ENCODE measurements at regions of chr5 and their contacts with region 1.

Region 1: GRCh38 chr5:142133330-142134206 is 25.0 kb downstream of the NDFIP1 start:
- DNase-seq: no peak

Region 2: DNA sequence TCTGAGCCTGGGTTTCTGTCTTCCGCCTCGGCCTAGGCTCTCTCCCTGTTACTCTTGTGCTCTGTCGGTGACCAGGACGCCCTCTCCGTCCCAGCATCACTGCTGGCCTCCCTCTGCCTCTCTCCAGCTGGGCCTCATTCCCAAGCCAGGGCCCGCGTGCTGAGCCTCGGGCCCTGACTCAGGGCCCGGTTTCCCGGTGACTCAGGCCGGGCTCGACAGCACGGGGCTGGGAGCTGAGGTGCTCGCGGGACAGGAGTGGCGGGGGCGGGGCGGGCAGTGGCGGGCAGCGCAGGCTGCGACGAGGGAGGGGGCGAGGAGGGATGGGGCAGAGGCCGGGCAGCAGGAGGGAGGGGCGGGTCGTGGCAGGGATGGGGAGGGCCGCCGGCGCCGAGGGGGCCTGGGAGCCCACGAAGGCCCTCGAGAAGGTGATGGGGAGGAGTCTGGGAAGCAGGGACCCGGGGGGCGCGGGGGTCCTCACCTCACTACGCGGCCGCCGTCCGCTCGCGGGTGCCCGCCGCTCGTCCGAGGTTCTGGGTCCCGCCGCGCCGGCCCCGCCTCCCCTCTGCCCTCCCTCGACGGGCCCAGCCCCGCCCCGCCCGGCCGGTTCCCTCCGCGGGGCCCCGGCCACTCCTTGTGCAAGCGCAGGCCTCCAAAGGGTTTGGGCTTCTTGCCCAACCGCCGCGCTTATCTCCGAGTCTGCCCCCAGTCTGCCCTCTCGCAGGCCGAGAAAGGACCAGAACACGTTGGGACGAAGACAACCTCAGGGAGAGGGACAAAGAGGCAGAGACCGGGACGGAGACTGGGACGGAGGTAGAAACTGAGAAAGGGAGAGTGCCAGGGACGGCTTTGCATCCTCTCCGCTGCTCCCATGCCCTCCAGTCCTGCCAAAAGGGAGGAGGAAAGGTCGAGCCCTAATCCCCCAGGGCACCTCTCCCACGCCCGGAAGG is 451.6 kb before region 1 on chr5 and contains the start of gene ARAP3:
- in situ Hi-C with region 1: loop called (anchors 10 kb)
- DNase-seq: peak; percentile 43

Region 3: DNA sequence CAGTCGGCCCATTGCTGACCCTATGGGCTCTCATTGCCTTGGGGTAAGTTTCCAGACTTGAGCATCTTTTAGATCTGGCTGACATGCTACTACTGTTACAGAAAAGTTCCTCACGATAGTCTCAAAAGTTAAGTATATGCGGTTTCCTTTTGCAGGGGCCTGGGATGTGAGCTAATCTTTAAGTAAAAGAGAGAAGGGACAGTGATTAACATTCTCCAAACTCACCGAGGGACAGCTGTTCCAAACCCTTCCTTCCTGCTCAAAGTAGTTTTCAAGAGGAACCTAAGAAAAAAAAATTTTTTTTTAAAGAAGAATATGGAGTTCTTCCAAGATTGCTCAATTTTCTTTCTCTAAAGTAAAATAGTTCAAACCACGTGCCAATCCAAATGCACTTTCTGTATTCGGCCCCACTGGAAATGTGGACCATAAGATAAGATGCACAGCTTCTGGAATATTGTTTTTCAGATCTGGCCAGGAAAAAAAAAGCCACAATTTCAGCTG is 359.3 kb after region 1 on chr5:
- in situ Hi-C with region 1: no loop called
- DNase-seq: no peak